Esophagus muscularis mucosa (tissue), 4 donors: ENCODE measurements at regions of chr12 and their contacts with region 1.

Region 1: DNA sequence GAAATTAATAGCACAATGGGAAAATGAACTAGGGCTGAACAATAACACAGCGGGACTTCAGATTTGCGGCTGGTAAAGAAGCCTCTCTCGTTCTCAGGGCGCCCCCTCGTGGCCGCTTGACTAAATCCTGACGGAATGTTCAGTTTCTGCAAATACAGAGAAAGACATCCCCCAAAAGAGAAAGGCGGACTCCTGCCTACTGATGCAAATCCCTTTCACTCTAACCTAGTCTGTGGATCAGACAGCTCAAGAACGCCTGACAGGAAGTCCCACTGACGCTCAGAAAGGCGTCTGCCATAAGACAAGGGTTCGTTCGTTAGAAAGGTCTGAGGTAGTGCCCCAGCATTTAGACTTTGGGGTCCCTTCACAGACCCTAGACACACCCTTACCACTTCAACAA is 2.5 kb downstream of the NUAK1 start:
- DNase-seq: peak; percentile 98
- H3K4me3 ChIP-seq: peak overlapping the region; percentile 73 to 86 (median 80)
- H3K27ac ChIP-seq: peak overlapping the region; percentile 47 to 96 (median 90)
- H3K4me1 ChIP-seq: peaks cover 45 to 90% (median 81%) of the 10 kb centered on the region in 4 donors
- H3K27me3 ChIP-seq: peaks cover 0 to 14% (median 0%) of the 10 kb centered on the region in 4 donors
- CTCF ChIP-seq: peak; percentile 79 to 82 (median 82)
- EP300 ChIP-seq: no peak
- POLR2A ChIP-seq: no peak

Region 2: DNA sequence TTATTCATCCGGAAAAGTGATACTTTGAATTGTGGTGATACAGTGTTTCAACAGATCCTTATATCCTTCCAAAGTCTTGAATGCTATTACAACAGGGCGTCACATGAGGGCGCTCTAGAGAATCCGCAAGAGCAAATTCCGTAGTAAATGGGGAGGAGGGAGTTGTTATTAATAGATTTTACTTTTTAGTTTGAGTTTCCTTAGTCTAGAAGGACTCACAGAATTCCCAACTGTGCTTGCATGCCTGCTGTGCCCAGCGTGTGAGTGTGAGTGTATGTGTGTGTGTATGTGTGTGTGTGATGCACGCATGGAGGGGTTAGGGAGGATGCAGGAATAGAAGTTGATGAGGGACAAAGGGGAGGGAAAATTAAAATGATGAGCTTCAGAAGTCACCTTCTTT is 430.5 kb before region 1 on chr12:
- intact Hi-C with region 1: loop called (anchors 2 kb)
- DNase-seq: no peak
- H3K4me3 ChIP-seq: no peak overlapping the region
- H3K27ac ChIP-seq: no peak overlapping the region
- H3K4me1 ChIP-seq: peaks cover 6 to 12% (median 9%) of the 10 kb centered on the region in 4 donors
- H3K27me3 ChIP-seq: no peaks in the 10 kb centered on the region
- CTCF ChIP-seq: peak; percentile 57 to 72 (median 59)
- EP300 ChIP-seq: no peak
- POLR2A ChIP-seq: no peak

Region 3: GRCh38 chr12:106564678-106565329 is 428.5 kb after region 1 on chr12:
- intact Hi-C with region 1: no loop called
- DNase-seq: no peak
- H3K4me3 ChIP-seq: no peak overlapping the region
- H3K27ac ChIP-seq: no peak overlapping the region
- H3K4me1 ChIP-seq: no peaks in the 10 kb centered on the region
- H3K27me3 ChIP-seq: peaks cover 0 to 29% (median 3%) of the 10 kb centered on the region in 4 donors
- CTCF ChIP-seq: no peak
- EP300 ChIP-seq: no peak
- POLR2A ChIP-seq: no peak

Region 4: DNA sequence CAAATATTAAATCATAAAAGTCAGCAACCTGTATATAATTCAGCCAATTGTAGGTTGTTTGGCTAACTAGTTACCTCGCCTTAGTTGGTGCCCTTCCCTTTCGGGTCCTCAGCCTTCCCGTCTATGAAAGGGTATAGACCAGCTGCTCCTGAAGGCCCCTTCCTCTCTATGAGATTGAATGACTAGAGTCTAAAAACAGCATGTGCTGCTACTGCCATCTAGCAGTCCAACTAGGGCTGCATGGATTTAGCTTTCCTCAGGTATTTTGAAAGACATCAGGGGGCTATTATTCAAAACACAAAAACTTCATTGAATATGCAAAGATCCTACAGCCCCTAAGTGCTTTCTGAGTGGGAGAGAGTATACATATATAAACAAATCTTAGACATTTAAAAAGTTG is 782.5 kb after region 1 on chr12:
- intact Hi-C with region 1: no loop called
- DNase-seq: no peak
- H3K4me3 ChIP-seq: no peak overlapping the region
- H3K27ac ChIP-seq: no peak overlapping the region
- H3K4me1 ChIP-seq: no peaks in the 10 kb centered on the region
- H3K27me3 ChIP-seq: no peaks in the 10 kb centered on the region
- CTCF ChIP-seq: no peak
- EP300 ChIP-seq: no peak
- POLR2A ChIP-seq: no peak